ENCODE measurements at regions of chr13 and their contacts with region 1.

Region 1: GRCh38 chr13:44758630-44759383 is 182.7 kb upstream of the TSC22D1 start:
- DNase-seq: peak; percentile 56 to 91
- H3K4me3 ChIP-seq: peak overlapping the region; percentile 48
- H3K27ac ChIP-seq: peak overlapping the region; percentile 98
- H3K4me1 ChIP-seq: peaks cover 68% of the 10 kb centered on the region
- H3K27me3 ChIP-seq: no peaks in the 10 kb centered on the region
- CTCF ChIP-seq: no peak

Region 2: GRCh38 chr13:44710576-44710975 is 48.2 kb before region 1 on chr13:
- CTCF ChIA-PET with region 1: no interaction called
- POLR2A ChIA-PET with region 1: interaction called, 7 read pairs
- intact Hi-C with region 1: loop called (anchors 2 kb)
- DNase-seq: peak; percentile 48 to 89
- H3K4me3 ChIP-seq: no peak overlapping the region
- H3K27ac ChIP-seq: peak overlapping the region; percentile 94
- H3K4me1 ChIP-seq: peaks cover 60% of the 10 kb centered on the region
- H3K27me3 ChIP-seq: no peaks in the 10 kb centered on the region
- CTCF ChIP-seq: no peak

Region 3: GRCh38 chr13:44917589-44918325 is 158.9 kb after region 1 on chr13:
- CTCF ChIA-PET with region 1: no interaction called
- POLR2A ChIA-PET with region 1: no interaction called
- intact Hi-C with region 1: loop called (anchors 5 kb)
- DNase-seq: peak; percentile 91 to 94
- H3K4me3 ChIP-seq: peak overlapping the region; percentile 63
- H3K27ac ChIP-seq: peak overlapping the region; percentile 86
- H3K4me1 ChIP-seq: peaks cover 34% of the 10 kb centered on the region
- H3K27me3 ChIP-seq: no peaks in the 10 kb centered on the region
- CTCF ChIP-seq: peak; percentile 37; the same call in 1 of the 2 replicates

Region 4: DNA sequence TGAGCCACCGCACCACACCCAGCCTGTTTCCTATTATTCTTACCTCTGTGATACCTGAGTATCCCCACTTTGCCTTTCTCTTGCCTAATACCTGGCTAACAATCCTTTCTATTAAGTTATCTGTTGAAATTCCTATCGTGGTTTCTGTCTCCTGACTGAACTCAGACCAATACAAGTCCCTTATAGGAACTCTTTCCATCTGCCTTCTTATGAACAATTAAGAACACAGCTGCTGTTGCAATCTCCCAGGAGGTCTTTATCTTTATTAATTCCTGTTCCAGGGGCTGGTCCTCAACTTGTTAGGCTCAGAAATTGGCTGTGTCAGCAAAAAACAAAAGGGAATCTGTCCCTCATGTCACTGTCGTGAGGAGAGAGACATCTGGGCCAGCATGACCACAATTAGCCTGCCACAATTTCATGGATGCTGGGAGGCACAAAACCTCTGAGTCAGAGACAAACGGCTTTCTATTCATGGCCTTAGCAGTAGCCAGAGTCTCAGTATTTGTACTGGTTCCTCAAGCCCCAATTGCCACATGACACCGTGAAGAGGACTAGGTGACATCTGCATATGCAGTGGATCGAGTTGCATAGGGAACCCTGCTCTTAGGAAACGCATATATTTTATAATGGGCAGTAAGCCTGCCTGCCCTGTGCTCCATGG is 172.3 kb after region 1 on chr13:
- CTCF ChIA-PET with region 1: no interaction called
- POLR2A ChIA-PET with region 1: interaction called, 4 read pairs
- intact Hi-C with region 1: loop called (anchors 5 kb)
- DNase-seq: peak; percentile 14 to 77
- H3K4me3 ChIP-seq: no peak overlapping the region
- H3K27ac ChIP-seq: peak overlapping the region; percentile 65
- H3K4me1 ChIP-seq: peaks cover 53% of the 10 kb centered on the region
- H3K27me3 ChIP-seq: no peaks in the 10 kb centered on the region
- CTCF ChIP-seq: no peak

Region 5: DNA sequence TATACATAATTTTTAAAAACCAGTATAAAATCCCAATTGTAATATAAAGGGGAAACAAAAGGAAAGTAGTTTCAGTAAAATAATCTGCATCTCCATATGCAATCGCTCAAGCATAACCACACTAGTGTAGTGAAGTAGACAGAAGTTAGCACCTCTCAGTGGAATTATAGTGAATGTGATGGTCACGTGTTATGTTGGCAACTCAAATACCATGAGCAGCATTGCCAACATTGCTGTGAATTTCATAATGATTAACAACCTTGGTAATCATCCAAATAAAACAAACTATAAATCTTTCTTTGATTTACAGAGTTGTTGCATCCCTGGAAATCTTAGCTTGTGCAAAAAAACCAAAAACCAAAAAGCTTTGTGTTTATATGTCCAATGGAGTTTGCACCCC is 1170.0 kb after region 1 on chr13:
- CTCF ChIA-PET with region 1: no interaction called
- POLR2A ChIA-PET with region 1: no interaction called
- intact Hi-C with region 1: no loop called
- DNase-seq: peak in 1 of 2 experiments; percentile 43
- H3K4me3 ChIP-seq: no peak overlapping the region
- H3K27ac ChIP-seq: no peak overlapping the region
- H3K4me1 ChIP-seq: no peaks in the 10 kb centered on the region
- H3K27me3 ChIP-seq: peaks cover 39% of the 10 kb centered on the region
- CTCF ChIP-seq: no peak